Motor neuron (in vitro differentiated cells): ENCODE measurements at regions of chr16 and their contacts with region 1.

Region 1: DNA sequence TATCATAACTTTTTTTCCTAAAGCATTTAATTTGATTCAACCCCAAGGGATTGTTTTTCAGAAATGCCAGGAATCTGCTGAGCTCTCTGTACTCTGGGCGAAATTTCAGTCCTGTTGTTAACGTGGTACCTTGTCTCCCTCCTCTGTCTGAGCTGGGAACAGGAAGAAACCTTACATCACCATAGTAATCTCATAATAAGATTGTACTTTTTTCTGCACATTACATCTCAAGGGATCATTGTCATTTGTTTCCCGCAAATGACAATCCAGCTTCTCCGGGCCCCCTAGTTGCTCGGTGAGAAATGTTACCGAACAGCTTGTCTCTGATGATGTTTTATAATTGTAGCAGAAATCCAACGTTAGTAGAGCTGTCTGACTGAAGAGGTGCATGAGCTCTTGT is 152.7 kb upstream of the ERCC4 start:
- ATAC-seq: peak in 6 of 8 experiments; percentile 80 to 100 (median 94)
- H3K4me3 ChIP-seq: no peak overlapping the region
- H3K27ac ChIP-seq: no peak overlapping the region
- H3K4me1 ChIP-seq: peaks cover 4 to 6% of the 10 kb centered on the region in 2 donors

Region 2: DNA sequence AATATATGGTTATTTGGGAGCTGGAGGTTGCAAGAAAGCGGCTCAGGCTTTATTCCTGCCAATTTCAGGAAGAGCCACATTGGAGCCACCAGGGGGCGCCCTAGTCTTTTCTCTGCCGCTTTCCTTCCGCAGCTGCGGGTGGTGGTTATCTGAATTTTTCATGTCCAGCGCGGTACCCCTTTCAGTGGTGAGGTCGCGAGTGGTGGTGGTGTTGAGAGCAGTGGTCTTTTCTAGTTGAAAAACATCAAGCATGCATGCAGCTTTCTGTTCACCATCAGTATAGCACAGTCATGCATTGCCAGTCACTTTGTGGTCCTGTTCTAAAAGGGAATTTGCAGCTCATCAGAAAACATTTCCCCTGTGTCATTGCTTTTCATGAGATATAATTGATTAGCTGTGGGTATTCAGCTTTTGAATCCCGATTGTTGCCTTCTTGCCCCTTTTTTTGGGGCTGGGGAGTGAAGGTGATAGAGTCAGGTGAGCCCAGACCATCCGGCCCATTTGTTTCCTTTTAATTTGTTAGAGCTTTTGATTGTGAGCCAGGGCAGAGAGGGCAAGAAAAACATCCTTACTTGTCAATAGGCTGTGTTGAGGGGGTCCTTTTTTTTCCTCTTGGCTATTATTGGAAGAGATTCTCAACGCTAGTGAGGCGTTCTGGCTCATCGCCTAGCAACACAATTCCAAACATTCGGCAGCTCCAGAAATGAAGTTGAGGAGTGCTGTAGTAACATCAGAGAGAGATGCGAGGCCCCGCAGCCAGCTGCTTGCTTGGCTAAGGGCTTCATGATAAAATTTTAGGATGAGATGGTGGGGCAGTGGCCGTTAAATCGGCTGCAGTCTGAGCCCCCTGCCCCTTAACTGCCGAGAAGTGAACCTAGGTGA is 1671.7 kb before region 1 on chr16:
- in situ Hi-C with region 1: loop called in 2 of 9 experiments (anchors 25 kb)
- ATAC-seq: peak; percentile 36 to 72 (median 58)
- H3K4me3 ChIP-seq: peak overlapping the region in 1 of 5 donors; percentile 7
- H3K27ac ChIP-seq: no peak overlapping the region
- H3K4me1 ChIP-seq: peaks cover 48 to 63% of the 10 kb centered on the region in 2 donors

Region 3: GRCh38 chr16:12896562-12896961 is 870.7 kb before region 1 on chr16:
- in situ Hi-C with region 1: loop called in 1 of 9 experiments (anchors 25 kb)
- ATAC-seq: peak in 2 of 8 experiments; percentile 25 to 31
- H3K4me3 ChIP-seq: no peak overlapping the region
- H3K27ac ChIP-seq: no peak overlapping the region
- H3K4me1 ChIP-seq: no peaks in the 10 kb centered on the region

Region 4: GRCh38 chr16:14077918-14078317 is 310.7 kb after region 1 on chr16:
- in situ Hi-C with region 1: no loop called
- ATAC-seq: no peak
- H3K4me3 ChIP-seq: no peak overlapping the region
- H3K27ac ChIP-seq: no peak overlapping the region
- H3K4me1 ChIP-seq: no peaks in the 10 kb centered on the region